ENCODE measurements at regions of chr20 and their contacts with region 1.

Region 1: DNA sequence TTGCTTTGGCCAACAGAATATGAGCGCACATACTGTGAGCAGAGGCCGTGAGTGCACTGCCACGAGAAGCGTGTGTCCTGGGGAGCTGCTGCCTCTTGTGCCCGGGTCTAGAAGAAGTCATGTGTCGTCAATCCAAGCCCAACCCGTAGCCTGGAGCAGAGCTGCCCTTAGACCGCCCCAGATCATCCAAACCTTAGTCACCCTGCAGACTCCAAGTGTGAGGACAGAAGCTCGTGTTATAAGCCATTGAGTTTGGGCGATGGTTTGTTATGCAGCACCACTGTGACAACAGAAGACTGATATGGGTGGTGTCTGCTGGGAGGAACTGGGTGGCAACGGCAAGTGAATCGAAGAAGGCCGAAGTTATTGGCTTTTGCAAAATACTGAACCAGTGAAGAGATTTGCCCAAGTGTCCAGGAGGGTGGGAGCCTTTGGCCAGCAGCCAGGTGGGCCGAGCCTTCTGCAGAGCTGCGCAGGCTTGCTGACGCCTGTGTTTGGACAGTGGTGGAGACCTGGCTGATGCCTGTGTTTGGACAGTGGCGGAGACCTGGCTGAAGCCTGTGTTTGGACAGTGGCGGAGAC is 101.3 kb upstream of the SULF2 start:
- DNase-seq: no peak
- ATAC-seq: no peak
- H3K4me3 ChIP-seq: no peak overlapping the region
- H3K27ac ChIP-seq: no peak overlapping the region
- H3K4me1 ChIP-seq: no peaks in the 10 kb centered on the region
- H3K27me3 ChIP-seq: peaks cover 0 to 37% of the 10 kb centered on the region in 2 donors
- CTCF ChIP-seq: no peak

Region 2: DNA sequence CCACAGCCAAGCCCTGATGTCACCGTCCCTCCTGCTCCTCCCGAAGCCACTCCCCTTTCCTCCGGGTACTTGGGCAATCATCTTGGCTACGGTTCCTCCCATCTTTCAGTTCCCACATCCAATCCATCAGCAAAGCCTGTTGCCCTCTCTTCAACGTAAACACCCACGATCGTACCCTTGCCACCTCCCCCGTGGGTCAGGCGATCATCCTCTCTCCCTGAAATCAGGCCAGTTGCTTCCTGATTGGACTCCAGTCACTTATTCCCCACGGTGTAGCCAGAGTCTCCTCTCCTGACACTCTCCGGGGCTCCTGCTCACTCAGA is 145.7 kb before region 1 on chr20:
- intact Hi-C with region 1: no loop called
- DNase-seq: peak in 2 of 4 donors; percentile 79 to 83
- ATAC-seq: peak; percentile 74
- H3K4me3 ChIP-seq: no peak overlapping the region
- H3K27ac ChIP-seq: no peak overlapping the region
- H3K4me1 ChIP-seq: peaks cover 0 to 22% of the 10 kb centered on the region in 2 donors
- H3K27me3 ChIP-seq: peaks cover 0 to 31% of the 10 kb centered on the region in 2 donors
- CTCF ChIP-seq: no peak

Region 3: DNA sequence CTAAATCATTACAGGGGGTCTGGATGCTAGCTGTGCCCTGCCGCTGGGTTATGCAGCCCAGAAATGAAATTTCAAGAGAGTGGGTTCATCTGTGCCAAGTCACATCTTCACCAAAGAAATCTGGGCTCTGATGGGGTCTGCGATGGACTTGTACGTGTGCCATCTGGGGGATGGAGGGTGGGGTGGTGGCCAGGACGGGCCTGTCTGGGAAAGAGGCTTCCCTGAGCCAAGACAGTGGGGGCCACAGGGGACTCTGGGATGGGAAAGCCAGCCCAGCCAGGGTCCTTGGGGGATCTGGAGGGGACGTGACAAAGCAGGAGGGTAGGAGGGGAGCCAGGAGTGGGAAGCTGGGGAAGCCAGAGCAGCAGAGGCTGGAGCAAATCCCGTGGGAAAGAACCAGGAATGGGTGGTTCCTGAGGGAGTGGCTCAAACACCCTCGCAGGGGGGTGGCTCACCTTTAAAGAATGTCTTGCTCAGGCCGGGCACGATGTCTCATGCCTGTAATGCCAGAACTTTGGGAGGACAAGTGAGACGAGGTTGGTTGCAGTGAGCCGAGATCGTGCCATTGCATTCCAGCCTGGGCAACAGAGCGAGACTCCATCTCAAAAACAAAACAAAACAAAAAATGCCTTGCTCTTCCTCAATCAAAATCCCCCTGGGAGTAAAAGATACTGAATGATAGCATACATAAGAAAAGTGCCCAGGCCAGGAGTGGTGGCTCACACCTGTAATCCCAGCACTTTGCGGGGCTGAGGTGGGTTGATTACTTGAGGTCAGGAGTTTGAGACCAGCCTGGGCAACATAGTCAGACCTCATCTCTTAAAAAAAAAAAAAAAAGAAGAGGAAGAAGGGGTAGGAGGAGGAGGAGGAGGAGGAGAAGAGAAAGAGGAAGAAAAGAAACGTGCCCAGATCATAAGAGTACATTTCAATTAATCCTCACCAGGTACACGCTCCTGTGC is 64.8 kb before region 1 on chr20:
- intact Hi-C with region 1: loop called in 1 of 2 experiments (anchors 10 kb)
- DNase-seq: no peak
- ATAC-seq: no peak
- H3K4me3 ChIP-seq: no peak overlapping the region
- H3K27ac ChIP-seq: no peak overlapping the region
- H3K4me1 ChIP-seq: no peaks in the 10 kb centered on the region
- H3K27me3 ChIP-seq: peaks cover 0 to 62% of the 10 kb centered on the region in 2 donors
- CTCF ChIP-seq: no peak

Region 4: DNA sequence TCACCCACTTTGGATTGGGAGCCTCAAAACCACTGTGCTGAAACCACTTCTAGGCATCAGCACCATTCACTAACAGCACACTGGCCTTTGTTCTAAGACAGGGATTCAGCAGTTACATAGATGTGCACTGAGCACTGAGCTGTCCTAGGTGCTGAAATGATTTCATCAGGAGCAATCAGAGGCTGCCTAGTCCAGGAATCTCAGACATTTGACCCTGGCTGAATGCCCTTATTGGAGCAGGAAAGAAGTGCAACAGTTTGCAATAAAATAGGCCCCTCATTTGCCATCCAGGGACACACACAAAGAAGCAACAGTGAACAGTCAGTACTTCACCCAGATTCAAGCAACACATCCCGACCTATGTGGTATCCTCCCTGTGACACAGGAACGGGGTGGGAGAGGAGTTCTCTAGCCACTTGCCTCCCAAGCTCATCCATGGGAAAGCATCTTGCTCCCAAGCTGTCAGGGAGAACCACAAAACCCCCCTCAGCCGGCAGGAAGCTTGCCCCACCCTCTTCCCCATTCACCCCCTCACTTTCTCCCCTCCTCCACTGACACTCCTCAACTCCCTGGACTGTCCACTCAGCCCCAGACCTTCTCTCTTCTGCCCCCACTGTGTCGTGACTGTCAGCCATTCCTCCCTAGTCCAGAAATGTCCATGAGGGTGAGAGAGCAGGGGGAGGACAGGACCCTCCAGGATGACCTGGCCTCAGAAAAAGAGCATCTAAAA is 636.8 kb after region 1 on chr20:
- intact Hi-C with region 1: loop called in 1 of 2 experiments (anchors 10 kb)
- DNase-seq: peak in 2 of 4 donors; percentile 62 to 79
- ATAC-seq: peak; percentile 79
- H3K4me3 ChIP-seq: no peak overlapping the region
- H3K27ac ChIP-seq: no peak overlapping the region
- H3K4me1 ChIP-seq: no peaks in the 10 kb centered on the region
- H3K27me3 ChIP-seq: peaks cover 0 to 10% of the 10 kb centered on the region in 2 donors
- CTCF ChIP-seq: no peak